Activated naive CD4-positive, alpha-beta T cell treated with anti-CD3 and anti-CD28 coated beads for 36 hours (primary cell): ENCODE measurements at regions of chr2 and their contacts with region 1.

Region 1: DNA sequence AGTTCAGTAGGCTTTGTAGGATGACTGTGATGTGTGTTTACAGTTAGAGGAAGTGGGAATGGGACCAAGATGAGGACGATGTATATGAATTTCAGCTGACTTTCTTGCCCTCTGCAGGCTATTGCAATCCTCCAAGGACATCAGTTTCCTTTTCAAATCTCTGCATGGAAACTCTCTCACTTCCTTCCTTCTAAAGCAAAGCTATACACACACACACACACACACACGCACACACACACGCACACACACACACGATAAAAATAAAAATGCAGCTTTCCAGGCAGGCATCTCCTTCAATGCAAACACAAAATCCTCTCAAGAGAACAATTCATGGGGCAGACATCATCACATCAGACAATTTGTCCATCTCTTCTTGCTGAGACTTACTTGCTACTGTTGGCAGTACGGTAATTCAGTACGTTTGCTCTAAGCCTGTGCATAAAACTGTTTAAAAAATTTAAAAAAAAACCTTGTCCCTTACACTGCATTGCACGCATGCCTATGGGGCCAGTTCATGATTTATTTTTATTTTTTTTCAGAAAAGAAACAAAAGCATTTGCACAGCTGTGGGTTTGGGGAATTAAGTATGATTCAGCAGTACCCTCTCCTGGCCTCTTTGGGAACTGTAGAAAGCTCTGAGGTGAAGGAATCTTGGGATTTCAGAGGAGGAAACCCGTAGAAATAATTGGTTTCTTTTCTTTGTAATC is 27.1 kb upstream of the ICOS start:
- DNase-seq: peak; percentile 53
- H3K4me3 Mint-ChIP-seq: no peak overlapping the region
- H3K27ac Mint-ChIP-seq: peak overlapping the region; percentile 34
- H3K4me1 Mint-ChIP-seq: peaks cover 22% of the 10 kb centered on the region
- H3K27me3 Mint-ChIP-seq: no peaks in the 10 kb centered on the region

Region 2: DNA sequence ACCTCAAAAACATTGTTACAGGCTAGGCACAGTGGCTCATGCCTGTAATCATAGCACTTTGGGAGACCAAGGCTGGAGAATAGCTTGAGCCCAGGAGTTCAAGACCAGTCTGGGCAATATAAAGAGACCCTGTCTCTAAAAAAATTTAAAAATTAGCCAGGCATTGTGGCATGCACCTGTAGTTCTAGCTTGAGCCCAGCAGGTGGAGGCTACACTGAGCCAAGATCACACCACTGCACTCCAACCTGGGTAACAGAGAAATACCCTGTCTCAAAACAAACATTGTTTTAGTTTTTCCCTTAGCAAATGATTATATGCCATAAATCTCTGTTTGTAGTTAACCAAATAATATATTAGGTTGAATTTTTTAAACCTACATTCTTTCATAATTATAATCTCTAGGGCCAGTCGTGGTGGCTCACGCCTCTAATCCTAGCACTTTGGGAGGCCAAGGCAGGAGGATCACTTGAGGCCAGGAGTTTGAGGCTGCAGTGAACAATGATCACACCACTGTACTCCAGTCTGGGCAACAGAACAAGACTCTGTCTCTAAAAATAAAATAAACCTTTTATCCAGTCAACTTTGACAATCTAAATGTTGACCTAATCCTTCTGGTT is 683.9 kb before region 1 on chr2:
- CTCF ChIA-PET with region 1: no interaction called
- intact Hi-C with region 1: loop called (anchors 2 kb)
- DNase-seq: peak; percentile 43
- H3K4me3 Mint-ChIP-seq: no peak overlapping the region
- H3K27ac Mint-ChIP-seq: no peak overlapping the region
- H3K4me1 Mint-ChIP-seq: no peaks in the 10 kb centered on the region
- H3K27me3 Mint-ChIP-seq: peaks cover 3% of the 10 kb centered on the region

Region 3: GRCh38 chr2:203650860-203651613 is 258.4 kb before region 1 on chr2:
- CTCF ChIA-PET with region 1: interaction called, 4 read pairs
- intact Hi-C with region 1: loop called (anchors 5 kb)
- DNase-seq: peak; percentile 26
- H3K4me3 Mint-ChIP-seq: no peak overlapping the region
- H3K27ac Mint-ChIP-seq: no peak overlapping the region
- H3K4me1 Mint-ChIP-seq: peaks cover 25% of the 10 kb centered on the region
- H3K27me3 Mint-ChIP-seq: no peaks in the 10 kb centered on the region

Region 4: GRCh38 chr2:203858176-203858575 is 51.2 kb before region 1 on chr2:
- CTCF ChIA-PET with region 1: interaction called, 19 read pairs
- intact Hi-C with region 1: loop called (anchors 1 kb)
- DNase-seq: peak; percentile 65
- H3K4me3 Mint-ChIP-seq: no peak overlapping the region
- H3K27ac Mint-ChIP-seq: peak overlapping the region; percentile 60
- H3K4me1 Mint-ChIP-seq: peaks cover 85% of the 10 kb centered on the region
- H3K27me3 Mint-ChIP-seq: no peaks in the 10 kb centered on the region

Region 5: DNA sequence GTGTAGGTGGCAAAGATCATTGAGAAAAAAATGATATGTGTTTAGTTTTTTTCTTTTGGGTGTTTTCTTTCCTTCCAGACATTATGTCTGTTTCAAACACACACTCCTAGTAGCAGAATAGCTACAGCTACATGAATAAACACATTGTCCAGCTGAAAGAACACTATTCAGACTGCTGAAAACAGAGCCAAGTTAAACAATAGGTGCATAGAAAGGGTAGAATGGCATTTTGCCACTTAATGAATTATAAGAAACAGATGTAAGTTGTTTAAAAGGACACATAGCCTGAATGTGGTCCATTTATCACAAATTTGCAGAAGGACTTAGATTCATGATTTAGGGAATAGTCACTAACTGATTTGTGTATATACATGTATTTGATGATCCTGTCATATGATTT is 21.7 kb before region 1 on chr2:
- CTCF ChIA-PET with region 1: interaction called, 8 read pairs
- intact Hi-C with region 1: loop called (anchors 1 kb)
- DNase-seq: no peak
- H3K4me3 Mint-ChIP-seq: no peak overlapping the region
- H3K27ac Mint-ChIP-seq: no peak overlapping the region
- H3K4me1 Mint-ChIP-seq: peaks cover 54% of the 10 kb centered on the region
- H3K27me3 Mint-ChIP-seq: no peaks in the 10 kb centered on the region